ENCODE measurements at regions of chr14 and their contacts with region 1.

Region 1: DNA sequence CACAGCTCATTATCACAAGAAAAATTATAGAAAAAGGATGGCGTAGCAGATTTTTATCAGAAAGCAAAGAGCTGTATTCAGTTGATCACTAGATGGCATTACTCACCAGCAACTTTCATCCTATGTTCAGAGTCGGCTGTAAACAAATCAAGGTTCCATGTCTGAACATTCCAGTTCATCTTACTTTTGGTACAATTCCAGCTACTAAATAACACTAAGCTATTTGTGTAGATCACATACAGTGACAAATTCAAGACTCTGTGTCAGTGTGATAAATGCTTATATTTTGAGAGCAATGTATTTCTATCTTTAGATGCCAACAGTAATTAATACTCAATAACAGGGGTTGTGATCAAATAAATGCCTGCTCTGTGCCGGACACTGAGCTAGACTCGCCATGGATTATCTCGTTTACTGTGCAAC is 30.1 kb downstream of the NRDE2 start:
- DNase-seq: peak; percentile 71
- H3K4me3 ChIP-seq: no peak overlapping the region
- H3K27ac ChIP-seq: peak overlapping the region; percentile 27
- H3K4me1 ChIP-seq: peaks cover 23% of the 10 kb centered on the region
- H3K27me3 ChIP-seq: no peaks in the 10 kb centered on the region
- CTCF ChIP-seq: peak; percentile 71

Region 2: GRCh38 chr14:90049390-90049789 is 252.3 kb before region 1 on chr14:
- CTCF ChIA-PET with region 1: no interaction called
- POLR2A ChIA-PET with region 1: no interaction called
- intact Hi-C with region 1: no loop called
- DNase-seq: no peak
- H3K4me3 ChIP-seq: no peak overlapping the region
- H3K27ac ChIP-seq: no peak overlapping the region
- H3K4me1 ChIP-seq: no peaks in the 10 kb centered on the region
- H3K27me3 ChIP-seq: no peaks in the 10 kb centered on the region
- CTCF ChIP-seq: no peak

Region 3: GRCh38 chr14:90399541-90400444 is 98.1 kb after region 1 on chr14:
- CTCF ChIA-PET with region 1: interaction called, 3 read pairs
- POLR2A ChIA-PET with region 1: no interaction called
- intact Hi-C with region 1: loop called (anchors 5 kb)
- DNase-seq: peak; percentile 96
- H3K4me3 ChIP-seq: peak overlapping the region; percentile 90
- H3K27ac ChIP-seq: peak overlapping the region; percentile 63
- H3K4me1 ChIP-seq: peaks cover 61% of the 10 kb centered on the region
- H3K27me3 ChIP-seq: no peaks in the 10 kb centered on the region
- CTCF ChIP-seq: peak; percentile 100

Region 4: DNA sequence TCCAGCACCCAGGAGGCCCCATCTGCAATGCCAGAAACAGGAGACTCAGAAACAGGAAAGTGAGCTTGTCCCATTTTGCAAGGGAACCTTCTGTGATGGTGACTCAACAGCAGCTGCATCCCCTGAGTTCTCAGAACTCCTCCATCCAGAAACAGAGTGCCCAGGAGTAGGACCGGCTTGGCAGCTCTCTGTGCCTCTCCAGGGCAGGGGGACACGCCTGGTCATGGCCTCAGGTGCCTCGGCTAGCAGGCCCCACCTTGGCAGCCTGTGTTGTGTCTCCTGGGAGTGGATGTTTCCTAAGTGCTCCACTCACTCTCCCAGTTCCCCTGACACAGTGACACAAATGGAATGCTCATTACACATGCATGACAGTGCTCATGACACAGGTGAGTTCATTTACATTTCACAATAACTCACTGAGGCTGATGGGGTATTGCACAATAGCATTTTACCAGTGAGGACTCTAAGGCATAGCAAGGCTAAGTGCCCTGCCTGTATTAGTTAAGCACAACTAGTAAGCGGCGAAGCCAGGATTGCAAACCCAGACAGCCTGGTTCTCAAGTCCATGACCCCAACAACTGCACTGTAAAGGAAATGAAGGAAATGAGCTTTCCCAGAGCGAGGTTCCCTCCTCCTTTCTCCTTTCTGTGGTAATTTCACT is 142.5 kb after region 1 on chr14:
- CTCF ChIA-PET with region 1: no interaction called
- POLR2A ChIA-PET with region 1: no interaction called
- intact Hi-C with region 1: loop called (anchors 2 kb)
- DNase-seq: peak; percentile 93
- H3K4me3 ChIP-seq: no peak overlapping the region
- H3K27ac ChIP-seq: peak overlapping the region; percentile 98
- H3K4me1 ChIP-seq: peaks cover 48% of the 10 kb centered on the region
- H3K27me3 ChIP-seq: no peaks in the 10 kb centered on the region
- CTCF ChIP-seq: no peak

Region 5: GRCh38 chr14:90758028-90758889 is 456.6 kb after region 1 on chr14:
- CTCF ChIA-PET with region 1: interaction called, 26 read pairs
- POLR2A ChIA-PET with region 1: no interaction called
- intact Hi-C with region 1: loop called (anchors 5 kb)
- DNase-seq: peak; percentile 93
- H3K4me3 ChIP-seq: peak overlapping the region; percentile 45
- H3K27ac ChIP-seq: peak overlapping the region; percentile 75
- H3K4me1 ChIP-seq: peaks cover 23% of the 10 kb centered on the region
- H3K27me3 ChIP-seq: no peaks in the 10 kb centered on the region
- CTCF ChIP-seq: peak; percentile 80

Region 6: DNA sequence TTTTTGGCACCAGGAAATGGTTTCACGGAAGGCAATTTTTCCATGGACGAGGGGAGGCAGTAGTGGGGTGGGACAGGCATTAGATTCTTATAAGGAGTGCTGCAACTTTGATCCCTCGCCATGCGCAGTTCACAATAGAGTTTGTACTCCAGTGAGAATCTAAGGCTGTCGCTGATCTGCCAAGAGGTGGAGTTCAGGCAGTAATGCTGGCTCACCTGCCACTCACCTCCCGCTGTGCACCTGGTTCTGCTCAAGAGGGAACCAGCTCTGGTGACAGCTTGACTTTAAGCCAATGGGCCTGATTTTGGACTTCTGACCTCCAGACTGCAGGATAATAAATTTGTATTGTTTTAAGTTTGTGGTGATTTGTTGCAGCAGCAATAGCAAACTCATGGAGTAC is 595.3 kb after region 1 on chr14:
- CTCF ChIA-PET with region 1: interaction called, 3 read pairs
- POLR2A ChIA-PET with region 1: no interaction called
- intact Hi-C with region 1: loop called (anchors 5 kb)
- DNase-seq: no peak
- H3K4me3 ChIP-seq: no peak overlapping the region
- H3K27ac ChIP-seq: no peak overlapping the region
- H3K4me1 ChIP-seq: no peaks in the 10 kb centered on the region
- H3K27me3 ChIP-seq: no peaks in the 10 kb centered on the region
- CTCF ChIP-seq: no peak